GM12878 (cell line): ENCODE measurements at regions of chr1 and their contacts with region 1.

Region 1: DNA sequence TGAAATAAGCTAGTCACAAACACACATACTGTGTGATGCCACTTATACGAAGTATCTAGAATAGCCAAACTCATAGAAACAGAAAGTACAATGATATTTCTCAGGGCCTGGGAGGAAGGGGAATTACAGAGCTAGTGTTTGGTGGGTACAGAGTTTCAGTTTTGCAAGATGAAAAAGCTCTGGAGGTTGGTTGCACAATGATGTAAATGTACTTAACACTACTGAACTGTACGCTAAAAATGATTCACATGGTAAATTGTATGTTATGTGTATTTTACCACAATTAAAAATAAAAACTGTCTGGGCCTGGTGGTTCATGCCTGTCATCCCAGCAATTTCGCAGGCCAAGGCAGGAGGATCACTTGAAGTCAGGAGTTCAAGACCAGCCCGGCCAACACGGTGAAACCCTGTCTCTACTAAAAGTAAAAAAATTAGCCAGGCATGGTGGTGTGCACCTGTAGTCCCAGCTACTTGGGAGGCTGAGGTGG is 15.3 kb upstream of the FHAD1 start:
- DNase-seq: peak; percentile 95
- ATAC-seq: peak; percentile 100
- H3K4me3 ChIP-seq: no peak overlapping the region
- H3K27ac ChIP-seq: peak overlapping the region; percentile 41; the same call in 1 of the 2 replicates
- H3K4me1 ChIP-seq: peaks cover 12% of the 10 kb centered on the region
- H3K27me3 ChIP-seq: no peaks in the 10 kb centered on the region
- CTCF ChIP-seq: no peak
- EP300 ChIP-seq: peak; percentile 20 to 62; a peak in 2 of 4 replicates
- POLR2A ChIP-seq: no peak
- RAD21 ChIP-seq: no peak

Region 2: GRCh38 chr1:15168479-15168878 is 63.3 kb before region 1 on chr1:
- CTCF ChIA-PET with region 1: interaction called, 7 read pairs
- POLR2A ChIA-PET with region 1: interaction called, 3 read pairs
- RAD21 ChIA-PET with region 1: interaction called, 7 read pairs
- SMC1A ChIA-PET with region 1: interaction called, 10 read pairs
- in situ Hi-C with region 1: no loop called
- intact Hi-C with region 1: no loop called
- DNase-seq: peak; percentile 63
- ATAC-seq: peak; percentile 82
- H3K4me3 ChIP-seq: no peak overlapping the region
- H3K27ac ChIP-seq: peak overlapping the region; percentile 47
- H3K4me1 ChIP-seq: peaks cover 13% of the 10 kb centered on the region
- H3K27me3 ChIP-seq: no peaks in the 10 kb centered on the region
- CTCF ChIP-seq: no peak
- EP300 ChIP-seq: no peak
- POLR2A ChIP-seq: no peak
- RAD21 ChIP-seq: no peak

Region 3: GRCh38 chr1:15180189-15180588 is 51.6 kb before region 1 on chr1:
- CTCF ChIA-PET with region 1: no interaction called
- POLR2A ChIA-PET with region 1: no interaction called
- RAD21 ChIA-PET with region 1: interaction called, 4 read pairs
- SMC1A ChIA-PET with region 1: interaction called, 11 read pairs
- in situ Hi-C with region 1: no loop called
- intact Hi-C with region 1: no loop called
- DNase-seq: no peak
- ATAC-seq: no peak
- H3K4me3 ChIP-seq: no peak overlapping the region
- H3K27ac ChIP-seq: no peak overlapping the region
- H3K4me1 ChIP-seq: peaks cover 34% of the 10 kb centered on the region
- H3K27me3 ChIP-seq: no peaks in the 10 kb centered on the region
- CTCF ChIP-seq: no peak
- EP300 ChIP-seq: no peak
- POLR2A ChIP-seq: no peak
- RAD21 ChIP-seq: no peak

Region 4: GRCh38 chr1:15246960-15247614 is 15.3 kb after region 1 on chr1 and contains the start of gene FHAD1:
- CTCF ChIA-PET with region 1: interaction called, 8 read pairs
- POLR2A ChIA-PET with region 1: interaction called, 18 read pairs
- RAD21 ChIA-PET with region 1: interaction called, 21 read pairs
- SMC1A ChIA-PET with region 1: interaction called, 43 read pairs
- in situ Hi-C with region 1: no loop called
- intact Hi-C with region 1: no loop called
- DNase-seq: no peak
- ATAC-seq: peak; percentile 73
- H3K4me3 ChIP-seq: peak within 1 kb of the TSS; percentile 28; the same call in 1 of the 2 replicates
- H3K27ac ChIP-seq: no peak within 1 kb of the TSS
- H3K4me1 ChIP-seq: peaks cover 20% of the 10 kb centered on the region
- H3K27me3 ChIP-seq: no peaks in the 10 kb centered on the region
- CTCF ChIP-seq: no peak
- EP300 ChIP-seq: no peak
- POLR2A ChIP-seq: no peak
- RAD21 ChIP-seq: no peak
- polyA plus RNA-seq, gene FHAD1: 0.09 TPM in 1 of 2 experiments, not detected in the other

Region 5: GRCh38 chr1:15251857-15252835 is 20.4 kb after region 1 on chr1:
- CTCF ChIA-PET with region 1: interaction called, 8 read pairs
- POLR2A ChIA-PET with region 1: interaction called, 18 read pairs
- RAD21 ChIA-PET with region 1: interaction called, 21 read pairs
- SMC1A ChIA-PET with region 1: interaction called, 43 read pairs
- in situ Hi-C with region 1: no loop called
- intact Hi-C with region 1: no loop called
- DNase-seq: no peak
- ATAC-seq: peak; percentile 38
- H3K4me3 ChIP-seq: no peak overlapping the region
- H3K27ac ChIP-seq: peak overlapping the region; percentile 48
- H3K4me1 ChIP-seq: peaks cover 27% of the 10 kb centered on the region
- H3K27me3 ChIP-seq: no peaks in the 10 kb centered on the region
- CTCF ChIP-seq: no peak
- EP300 ChIP-seq: no peak
- POLR2A ChIP-seq: no peak
- RAD21 ChIP-seq: no peak

Region 6: DNA sequence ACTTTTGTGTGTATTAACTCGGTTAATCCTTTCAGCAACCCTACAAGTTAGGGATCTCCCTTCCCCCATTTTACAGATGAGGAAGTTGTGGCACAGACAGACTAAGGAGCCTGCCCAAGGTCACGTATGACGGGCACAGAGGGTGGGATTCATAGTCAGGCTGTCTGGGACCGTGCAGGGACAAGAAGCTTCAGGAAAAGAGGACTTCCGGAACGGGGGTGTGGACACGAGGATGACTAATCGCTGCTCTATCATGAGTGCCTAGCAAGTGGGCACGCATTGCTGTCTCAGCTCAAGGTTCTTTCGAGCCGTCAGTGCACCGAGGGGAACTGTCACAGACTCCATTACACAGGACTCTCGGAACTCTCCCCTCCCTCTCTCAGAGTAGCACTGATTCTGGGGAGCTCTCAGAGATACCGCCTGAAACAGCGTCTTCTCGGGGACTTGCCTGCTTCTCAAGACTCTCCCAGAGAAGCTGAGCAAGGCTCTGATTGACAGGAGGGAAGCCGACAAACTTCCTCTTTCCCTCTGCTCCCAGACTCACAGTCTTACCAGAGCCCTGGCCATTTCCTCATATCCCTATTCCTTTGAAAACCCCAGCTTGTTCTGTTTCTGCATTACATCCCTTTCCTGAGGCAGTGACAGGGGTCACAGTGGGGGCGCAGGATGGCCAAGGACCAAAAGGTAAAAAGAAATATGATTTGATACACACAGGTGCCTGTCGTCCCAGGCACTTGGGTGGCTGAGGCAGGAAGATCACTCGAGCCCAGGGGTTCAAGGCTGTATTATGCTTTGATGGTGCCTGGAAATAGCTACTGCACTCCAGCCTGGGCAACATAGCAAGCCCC is 29.6 kb after region 1 on chr1:
- CTCF ChIA-PET with region 1: interaction called, 13 read pairs
- POLR2A ChIA-PET with region 1: interaction called, 3 read pairs
- RAD21 ChIA-PET with region 1: interaction called, 18 read pairs
- SMC1A ChIA-PET with region 1: interaction called, 23 read pairs
- in situ Hi-C with region 1: no loop called
- intact Hi-C with region 1: no loop called
- DNase-seq: no peak
- ATAC-seq: peak; percentile 78
- H3K4me3 ChIP-seq: peak overlapping the region; percentile 25; the same call in 1 of the 2 replicates
- H3K27ac ChIP-seq: peak overlapping the region; percentile 63
- H3K4me1 ChIP-seq: peaks cover 21% of the 10 kb centered on the region
- H3K27me3 ChIP-seq: no peaks in the 10 kb centered on the region
- CTCF ChIP-seq: no peak
- EP300 ChIP-seq: 0 out of 4 replicates have a peak, but pooled peaks of 1 of the 2 experiments have one; percentile 3
- POLR2A ChIP-seq: no peak
- RAD21 ChIP-seq: no peak